H1 (cell line): ENCODE measurements at regions of chr5 and their contacts with region 1.

Region 1: DNA sequence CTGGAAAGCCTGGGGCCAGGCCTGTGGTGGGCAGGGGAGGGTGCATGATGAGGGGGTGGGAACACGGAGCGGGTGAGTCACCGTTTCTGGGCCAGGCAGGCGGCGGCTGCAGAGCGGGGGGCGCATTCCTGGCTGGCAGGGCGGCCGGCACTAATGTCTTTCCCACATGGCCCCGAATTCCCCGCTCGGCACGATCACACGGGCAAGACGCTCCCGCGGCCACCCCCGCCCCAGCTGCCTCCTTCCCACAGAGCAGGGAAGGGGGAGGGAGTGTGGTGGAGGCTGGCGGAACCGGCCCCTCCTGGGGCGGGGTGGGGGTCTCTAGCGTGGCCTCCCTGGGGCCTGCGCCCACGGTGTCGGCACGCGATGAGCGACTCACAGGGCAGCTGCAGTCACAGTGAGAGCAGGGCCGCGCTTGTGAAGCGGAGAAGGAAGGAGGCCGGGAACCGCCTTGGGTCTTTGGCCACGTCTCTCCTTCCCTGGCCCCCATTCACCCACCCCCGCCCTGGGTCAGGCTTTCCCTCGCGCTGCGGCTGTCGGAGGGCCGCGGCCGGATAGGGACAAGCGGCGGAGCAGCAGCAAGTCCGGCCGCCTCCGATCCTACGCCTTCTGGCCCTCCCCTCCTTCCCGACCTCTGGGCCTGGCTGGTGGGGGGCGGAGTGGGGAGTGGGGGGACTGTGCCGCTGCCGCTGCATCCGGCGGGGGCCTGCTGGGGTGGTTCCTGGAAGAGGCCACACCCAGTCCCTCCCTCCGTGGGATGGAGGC is 48.9 kb downstream of the CXXC5 start:
- DNase-seq: no peak
- H3K4me3 ChIP-seq: peak overlapping the region; percentile 28 to 58 (median 34); a peak in 7 of 8 replicates
- H3K27ac ChIP-seq: 0 out of 2 replicates have a peak overlapping the region, but pooled peaks have one; percentile 20
- H3K4me1 ChIP-seq: peaks cover 24 to 51% (median 38%) of the 10 kb centered on the region in 4 experiments
- H3K27me3 ChIP-seq: peaks cover 0 to 4% (median under 1%) of the 10 kb centered on the region in 4 experiments; a peak in 4 of 7 replicates
- CTCF ChIP-seq: no peak
- EP300 ChIP-seq: no peak
- POLR2A ChIP-seq: peak in 1 of 2 experiments; percentile 51; a peak in 1 of 3 replicates
- RAD21 ChIP-seq: no peak

Region 2: GRCh38 chr5:139593716-139594319 is 103.3 kb before region 1 on chr5:
- CTCF ChIA-PET with region 1: no interaction called
- POLR2A ChIA-PET with region 1: no interaction called
- DNase-seq: no peak
- H3K4me3 ChIP-seq: no peak overlapping the region
- H3K27ac ChIP-seq: no peak overlapping the region
- H3K4me1 ChIP-seq: peaks cover 0 to 2% (median 0%) of the 10 kb centered on the region in 4 experiments; a peak in 1 of 7 replicates
- H3K27me3 ChIP-seq: no peaks in the 10 kb centered on the region
- CTCF ChIP-seq: no peak
- EP300 ChIP-seq: no peak
- POLR2A ChIP-seq: no peak
- RAD21 ChIP-seq: no peak

Region 3: DNA sequence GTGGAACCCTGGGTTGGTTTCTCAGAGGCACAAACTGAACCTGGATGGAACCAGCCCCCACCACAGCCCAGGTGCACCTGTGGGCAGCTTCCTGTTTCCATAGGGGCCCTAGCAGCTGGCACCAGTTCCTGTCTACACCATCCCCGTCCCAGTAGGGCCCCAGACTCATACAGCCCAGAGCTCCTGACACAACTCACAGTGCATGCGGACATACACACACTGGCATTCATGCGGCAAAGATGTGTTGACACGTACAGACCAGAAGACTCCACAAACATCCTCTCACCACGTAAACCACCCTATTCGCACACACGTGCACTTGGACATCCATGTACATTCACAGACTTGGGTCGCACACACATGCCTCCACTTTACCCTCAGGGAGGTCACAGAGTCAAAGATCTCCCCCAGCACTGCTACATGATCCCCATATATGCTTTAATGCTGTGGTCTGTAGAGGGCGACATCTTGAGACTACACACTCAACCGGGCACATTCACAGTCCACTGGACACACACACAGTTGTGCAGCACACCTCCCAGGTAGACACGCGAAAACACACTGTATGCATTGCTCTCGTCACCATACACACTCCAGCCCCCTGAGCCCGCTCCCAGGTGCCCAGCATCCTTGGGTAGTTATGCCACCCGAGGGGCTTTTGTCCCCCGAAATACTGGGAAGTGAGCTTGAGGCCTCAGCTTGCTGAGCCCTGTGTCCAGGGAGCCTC is 26.5 kb before region 1 on chr5:
- CTCF ChIA-PET with region 1: interaction called, 19 read pairs
- POLR2A ChIA-PET with region 1: interaction called, 3 read pairs
- DNase-seq: no peak
- H3K4me3 ChIP-seq: no peak overlapping the region
- H3K27ac ChIP-seq: no peak overlapping the region
- H3K4me1 ChIP-seq: peaks cover 9 to 55% (median 43%) of the 10 kb centered on the region in 4 experiments
- H3K27me3 ChIP-seq: no peaks in the 10 kb centered on the region
- CTCF ChIP-seq: peak in 1 of 3 experiments; percentile 50; a peak in 1 of 4 replicates
- EP300 ChIP-seq: no peak
- POLR2A ChIP-seq: no peak
- RAD21 ChIP-seq: no peak

Region 4: GRCh38 chr5:139684881-139685749 is 12.0 kb before region 1 on chr5:
- CTCF ChIA-PET with region 1: interaction called, 33 read pairs
- POLR2A ChIA-PET with region 1: interaction called, 76 read pairs
- DNase-seq: no peak
- H3K4me3 ChIP-seq: no peak overlapping the region
- H3K27ac ChIP-seq: no peak overlapping the region
- H3K4me1 ChIP-seq: peaks cover 37 to 67% (median 57%) of the 10 kb centered on the region in 4 experiments
- H3K27me3 ChIP-seq: no peaks in the 10 kb centered on the region
- CTCF ChIP-seq: peak in 1 of 3 experiments; percentile 27; a peak in 2 of 4 replicates
- EP300 ChIP-seq: no peak
- POLR2A ChIP-seq: no peak
- RAD21 ChIP-seq: peak in 1 of 2 experiments; percentile 25; a peak in 2 of 4 replicates

Region 5: DNA sequence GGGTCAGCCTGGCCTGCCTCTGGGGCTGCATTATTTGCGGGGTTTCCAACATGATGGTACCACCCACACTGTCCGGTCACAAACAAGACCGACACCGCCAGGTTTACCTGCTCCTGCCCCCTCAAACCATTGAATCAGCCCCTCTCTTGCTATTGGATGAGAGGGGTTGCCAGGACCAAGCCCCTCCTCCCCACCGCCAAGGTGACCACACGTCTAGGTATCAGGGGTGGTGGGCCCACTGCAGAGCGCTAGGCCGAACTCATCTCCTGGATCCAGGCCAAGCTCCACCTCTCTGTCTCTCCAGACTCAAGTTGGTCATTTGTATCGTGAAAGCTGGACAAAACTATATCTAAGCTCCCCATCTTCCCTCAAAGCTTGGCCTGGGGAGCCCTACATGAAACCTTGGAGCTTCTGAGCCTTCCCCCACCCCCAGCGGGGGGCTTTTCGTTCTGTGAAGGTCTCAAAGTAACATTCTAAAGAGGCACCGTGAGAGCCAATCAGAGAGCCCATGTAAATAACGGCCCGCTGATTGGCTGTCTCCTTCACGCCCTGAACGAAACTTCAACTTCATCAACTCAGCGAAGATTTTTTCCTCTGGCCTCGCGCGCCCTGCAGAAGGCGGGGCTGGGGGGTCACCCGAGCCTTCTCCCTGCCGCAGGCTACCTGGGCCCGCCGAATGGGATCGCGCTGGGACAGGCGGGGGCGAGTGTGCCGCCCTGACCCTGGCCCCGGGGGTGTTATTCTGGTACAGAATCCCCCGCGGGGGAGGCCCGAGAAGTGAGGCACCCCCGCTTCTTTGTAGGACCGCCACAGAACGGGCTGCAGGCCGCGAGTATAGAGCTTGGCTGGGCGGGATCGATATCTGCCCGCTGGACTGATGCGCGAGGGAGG is 49.0 kb after region 1 on chr5:
- CTCF ChIA-PET with region 1: interaction called, 4 read pairs
- POLR2A ChIA-PET with region 1: interaction called, 12 read pairs
- DNase-seq: peak; percentile 75 to 89
- H3K4me3 ChIP-seq: peak overlapping the region; percentile 30 to 64 (median 56)
- H3K27ac ChIP-seq: no peak overlapping the region
- H3K4me1 ChIP-seq: peaks cover 3 to 44% (median 29%) of the 10 kb centered on the region in 4 experiments
- H3K27me3 ChIP-seq: peaks cover 24 to 50% (median 42%) of the 10 kb centered on the region in 4 experiments
- CTCF ChIP-seq: no peak
- EP300 ChIP-seq: no peak
- POLR2A ChIP-seq: no peak
- RAD21 ChIP-seq: no peak

Region 6: GRCh38 chr5:140094889-140095288 is 397.8 kb after region 1 on chr5:
- CTCF ChIA-PET with region 1: no interaction called
- POLR2A ChIA-PET with region 1: no interaction called
- DNase-seq: no peak
- H3K4me3 ChIP-seq: no peak overlapping the region
- H3K27ac ChIP-seq: no peak overlapping the region
- H3K4me1 ChIP-seq: no peaks in the 10 kb centered on the region
- H3K27me3 ChIP-seq: no peaks in the 10 kb centered on the region
- CTCF ChIP-seq: no peak
- EP300 ChIP-seq: no peak
- POLR2A ChIP-seq: no peak
- RAD21 ChIP-seq: no peak